Activated CD4-positive, alpha-beta memory T cell treated with anti-CD3 and anti-CD28 coated beads for 36 hours (primary cell): ENCODE measurements at regions of chr5 and their contacts with region 1.

Region 1: GRCh38 chr5:78984439-78985115 is 533 bp downstream of the ARSB start:
- DNase-seq: peak; percentile 86
- H3K4me3 Mint-ChIP-seq: peak overlapping the region; percentile 84
- H3K27ac Mint-ChIP-seq: peak overlapping the region; percentile 87
- H3K4me1 Mint-ChIP-seq: peaks cover 34% of the 10 kb centered on the region
- H3K27me3 Mint-ChIP-seq: no peaks in the 10 kb centered on the region

Region 2: DNA sequence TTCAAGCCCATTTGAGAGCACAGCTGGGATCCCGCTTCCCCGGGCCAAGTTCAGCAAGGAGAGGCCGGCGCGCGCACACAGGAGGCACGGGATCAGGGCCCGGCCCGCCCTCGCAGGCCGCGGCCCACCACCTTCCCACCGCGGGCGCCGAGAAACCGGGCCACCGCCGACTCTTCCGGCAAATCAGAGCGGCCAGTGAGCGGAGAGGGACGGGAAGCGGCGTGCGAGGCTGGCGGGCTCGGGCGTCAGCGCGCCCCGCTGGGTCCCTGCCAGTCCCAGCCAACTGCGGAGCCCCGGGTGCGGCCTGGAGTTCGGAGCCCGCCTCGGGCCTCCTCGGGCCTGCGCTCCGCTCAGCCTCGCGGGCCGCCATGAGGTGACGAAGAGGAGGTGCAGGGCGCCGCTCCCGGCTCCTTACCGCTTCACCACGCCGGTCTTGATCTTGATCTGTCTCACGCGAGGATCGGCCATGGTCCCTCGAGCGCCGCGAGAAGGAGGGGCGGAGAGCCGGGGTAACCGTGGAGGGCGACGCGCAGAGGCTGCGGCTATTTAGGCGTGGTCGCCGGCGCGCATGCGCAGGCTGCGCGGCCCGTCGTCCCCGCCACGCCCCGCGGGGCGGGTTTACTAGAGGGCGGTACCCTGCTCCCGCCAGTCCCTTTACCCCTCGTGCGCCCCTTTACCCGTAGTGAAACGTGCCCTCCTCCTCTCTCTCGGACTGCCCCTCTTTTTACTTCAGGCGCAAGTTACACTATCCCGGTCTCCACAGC is 1208.6 kb before region 1 on chr5 and contains the start of gene TBCA:
- CTCF ChIA-PET with region 1: no interaction called
- POLR2A ChIA-PET with region 1: no interaction called
- intact Hi-C with region 1: loop called (anchors 5 kb)
- DNase-seq: peak; percentile 90
- H3K4me3 Mint-ChIP-seq: peak within 1 kb of the TSS; percentile 89
- H3K27ac Mint-ChIP-seq: peak within 1 kb of the TSS; percentile 95
- H3K4me1 Mint-ChIP-seq: peaks cover 44% of the 10 kb centered on the region
- H3K27me3 Mint-ChIP-seq: no peaks in the 10 kb centered on the region
- total RNA-seq, gene TBCA: 206 to 220 TPM

Region 3: DNA sequence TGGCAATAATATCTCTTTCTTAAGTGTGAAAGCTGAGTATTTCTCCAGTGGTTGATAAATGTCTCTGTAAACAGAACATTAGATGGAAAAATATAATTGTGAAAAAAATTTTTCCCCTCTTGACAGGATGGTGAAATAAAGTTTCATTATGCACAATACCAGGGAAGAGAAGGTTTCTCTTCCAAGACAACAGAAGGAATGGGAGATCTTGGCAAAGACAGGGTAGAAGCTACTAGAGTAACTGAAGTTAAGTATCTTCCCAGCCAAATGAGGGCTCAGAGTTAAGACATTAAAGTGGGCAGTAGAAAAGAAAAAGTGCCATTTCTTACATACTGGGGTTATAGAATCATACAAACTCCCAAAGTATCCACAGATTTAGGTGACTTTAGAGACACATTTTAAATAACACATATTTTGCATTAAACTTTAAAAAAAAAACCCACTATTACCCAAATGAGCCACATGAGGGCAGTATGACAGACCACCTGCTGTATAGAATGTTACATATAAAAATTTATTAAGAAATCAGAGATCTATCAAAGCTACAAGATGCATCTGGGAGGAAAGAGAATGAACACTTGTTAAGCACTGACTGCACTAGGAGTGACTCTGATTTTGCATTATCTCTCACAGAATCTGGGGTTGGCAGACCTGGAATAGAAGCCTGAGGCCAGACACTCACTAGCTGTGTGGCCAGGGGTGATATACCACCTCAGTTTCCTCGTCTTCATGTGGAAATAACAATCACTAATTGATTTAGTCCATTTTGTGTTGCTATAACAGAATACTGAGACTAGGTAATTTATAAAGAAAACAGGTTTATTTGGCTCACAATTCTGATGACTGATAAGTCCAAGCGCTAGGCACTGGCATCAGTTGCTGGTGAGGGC is 98.0 kb before region 1 on chr5:
- CTCF ChIA-PET with region 1: interaction called, 6 read pairs
- POLR2A ChIA-PET with region 1: no interaction called
- intact Hi-C with region 1: loop called (anchors 2 kb)
- DNase-seq: no peak
- H3K4me3 Mint-ChIP-seq: no peak overlapping the region
- H3K27ac Mint-ChIP-seq: no peak overlapping the region
- H3K4me1 Mint-ChIP-seq: peaks cover 12% of the 10 kb centered on the region
- H3K27me3 Mint-ChIP-seq: no peaks in the 10 kb centered on the region

Region 4: DNA sequence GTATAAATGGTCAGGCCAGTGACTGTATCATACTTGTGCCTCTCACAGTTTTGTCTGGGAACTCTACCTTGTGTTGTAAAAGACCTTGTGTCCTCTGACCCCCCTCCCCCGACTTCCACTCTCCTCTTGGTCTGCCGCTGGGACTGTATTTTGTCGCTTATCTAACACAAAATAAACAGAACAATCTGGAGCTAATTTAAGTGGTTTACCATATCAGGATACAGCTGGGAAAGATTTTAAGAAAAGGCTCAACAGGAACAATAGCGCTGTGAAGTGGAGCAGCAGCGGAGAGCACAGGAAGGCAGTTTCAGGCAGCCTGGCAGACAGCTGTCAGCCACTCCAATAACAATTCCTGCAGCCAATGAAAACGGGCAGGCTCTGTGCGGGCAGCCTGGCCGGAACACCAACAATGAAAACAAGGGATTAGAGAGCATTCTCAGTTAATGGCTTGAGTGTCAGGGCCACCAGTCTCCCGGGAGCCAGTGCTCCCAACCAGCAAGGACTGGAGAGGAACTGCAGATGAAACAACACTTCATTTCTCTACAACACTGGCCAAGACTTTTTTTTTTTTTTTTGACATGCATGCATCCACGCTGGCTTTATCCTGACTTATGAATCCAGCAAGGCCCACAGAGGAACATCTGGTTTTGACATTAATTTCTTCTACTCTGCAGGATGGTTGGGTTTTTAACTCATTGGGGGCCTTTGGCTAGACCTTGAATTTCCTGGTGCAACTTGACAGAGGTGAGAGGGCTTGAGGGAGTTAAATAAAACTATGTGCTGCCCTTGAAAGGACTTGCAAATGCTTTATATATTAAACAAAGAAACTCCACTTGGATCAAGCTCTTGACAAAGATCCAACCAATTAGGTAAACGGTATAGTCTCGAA is 76.2 kb before region 1 on chr5:
- CTCF ChIA-PET with region 1: no interaction called
- POLR2A ChIA-PET with region 1: no interaction called
- intact Hi-C with region 1: no loop called
- DNase-seq: no peak
- H3K4me3 Mint-ChIP-seq: no peak overlapping the region
- H3K27ac Mint-ChIP-seq: no peak overlapping the region
- H3K4me1 Mint-ChIP-seq: no peaks in the 10 kb centered on the region
- H3K27me3 Mint-ChIP-seq: no peaks in the 10 kb centered on the region

Region 5: GRCh38 chr5:79020861-79021561 is 36.4 kb after region 1 on chr5:
- CTCF ChIA-PET with region 1: interaction called, 14 read pairs
- POLR2A ChIA-PET with region 1: no interaction called
- intact Hi-C with region 1: no loop called
- DNase-seq: peak; percentile 66
- H3K4me3 Mint-ChIP-seq: no peak overlapping the region
- H3K27ac Mint-ChIP-seq: no peak overlapping the region
- H3K4me1 Mint-ChIP-seq: peaks cover 7% of the 10 kb centered on the region
- H3K27me3 Mint-ChIP-seq: peaks cover 43% of the 10 kb centered on the region

Region 6: DNA sequence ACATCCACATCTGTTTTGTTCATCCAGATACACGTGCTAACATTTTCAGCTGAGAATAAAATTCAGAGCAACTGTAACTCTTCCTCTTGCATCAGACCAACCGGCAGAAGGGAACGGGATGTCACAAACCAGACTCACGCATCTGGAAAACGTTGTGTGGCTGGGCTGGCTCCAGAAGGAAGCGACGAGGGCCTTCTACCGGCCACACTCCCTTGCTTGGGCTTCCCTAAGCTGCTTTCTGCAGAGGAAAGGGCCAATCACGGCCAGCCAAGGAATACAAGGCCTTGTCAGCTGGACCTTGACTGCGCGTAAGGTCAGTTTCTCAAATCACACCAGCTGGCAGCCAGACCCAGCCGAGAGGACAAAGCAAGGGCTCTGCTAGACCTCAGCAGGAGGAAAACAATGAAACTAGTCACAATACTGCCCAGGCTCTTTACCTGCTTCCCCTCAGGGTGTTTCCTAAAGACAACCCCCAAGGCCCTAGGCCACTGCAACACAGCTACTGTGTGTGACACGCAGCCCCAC is 1156.6 kb after region 1 on chr5:
- CTCF ChIA-PET with region 1: no interaction called
- POLR2A ChIA-PET with region 1: no interaction called
- intact Hi-C with region 1: no loop called
- DNase-seq: no peak
- H3K4me3 Mint-ChIP-seq: peak overlapping the region; percentile 40
- H3K27ac Mint-ChIP-seq: peak overlapping the region; percentile 87
- H3K4me1 Mint-ChIP-seq: peaks cover 77% of the 10 kb centered on the region
- H3K27me3 Mint-ChIP-seq: no peaks in the 10 kb centered on the region

Region 7: GRCh38 chr5:80284720-80285119 is 1300.1 kb after region 1 on chr5:
- CTCF ChIA-PET with region 1: no interaction called
- POLR2A ChIA-PET with region 1: no interaction called
- intact Hi-C with region 1: loop called (anchors 10 kb)
- DNase-seq: peak; percentile 47
- H3K4me3 Mint-ChIP-seq: no peak overlapping the region
- H3K27ac Mint-ChIP-seq: peak overlapping the region; percentile 54
- H3K4me1 Mint-ChIP-seq: peaks cover 15% of the 10 kb centered on the region
- H3K27me3 Mint-ChIP-seq: no peaks in the 10 kb centered on the region